Astrocyte of the cerebellum (primary cell): ENCODE measurements at regions of chr6 and their contacts with region 1.

Region 1: DNA sequence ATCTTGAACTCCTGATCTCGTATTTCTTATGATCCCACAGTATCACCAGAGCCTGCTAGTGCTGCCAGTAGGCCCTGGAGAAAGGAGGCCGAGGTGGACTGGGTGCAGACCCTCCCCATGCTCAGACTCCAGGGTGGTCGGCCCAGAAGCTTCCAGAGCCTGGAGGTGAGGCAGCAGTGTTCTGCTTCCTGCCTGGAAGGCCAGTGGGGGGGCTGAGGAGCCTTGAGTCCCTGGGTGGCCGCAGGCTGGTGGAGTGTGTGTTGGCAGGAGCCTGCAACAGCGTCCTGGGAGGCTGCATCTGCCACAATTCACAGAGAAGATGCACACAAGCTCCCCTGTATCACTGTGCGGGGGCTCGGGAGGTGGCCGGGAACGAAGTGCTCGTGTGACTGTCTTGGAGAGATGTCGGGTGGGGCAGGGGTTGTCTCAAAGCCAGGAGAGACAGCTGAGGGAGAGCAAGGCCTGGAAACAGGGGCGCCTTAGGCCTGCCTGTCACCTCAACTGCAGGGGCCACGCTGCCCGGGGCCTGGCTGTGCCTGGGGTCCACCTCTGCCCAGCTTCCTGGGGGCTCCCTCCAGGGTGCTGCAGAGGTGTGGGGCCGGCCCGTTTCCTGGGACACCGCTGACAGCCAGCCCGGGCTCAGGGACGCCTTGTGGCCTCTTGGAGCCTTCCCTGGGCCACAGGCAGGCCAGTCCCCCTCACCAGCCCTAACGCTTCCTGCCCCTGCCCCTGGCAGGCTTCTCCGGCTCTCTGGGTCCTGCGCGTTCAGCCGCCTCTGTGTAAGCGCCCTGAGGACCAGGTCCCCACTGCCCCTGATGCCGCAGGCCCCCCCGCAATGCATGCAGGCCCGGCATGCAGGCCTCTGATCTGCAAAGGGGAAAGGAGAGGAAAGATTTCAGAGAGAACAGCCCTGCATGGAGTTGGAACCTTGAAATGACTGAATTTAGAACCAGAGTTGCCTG is 24.2 kb upstream of the MAS1 start:
- DNase-seq: no peak
- H3K4me3 ChIP-seq: no peak overlapping the region
- CTCF ChIP-seq: no peak

Region 2: GRCh38 chr6:159959976-159960384 is 93.4 kb after region 1 on chr6:
- in situ Hi-C with region 1: loop called (anchors 5 kb)
- DNase-seq: no peak
- H3K4me3 ChIP-seq: no peak overlapping the region
- CTCF ChIP-seq: no peak